Activated T-helper 1 cell treated with anti-CD3 and anti-CD28 coated beads, Interleukin-12 subunit alpha, Interleukin-12 subunit beta, Interleukin-2, Interleukin-4 antibody, amounts not matched to agents 30 ng/mL and 10 ng/mL and 1 ng/mL, durations not matched to agents 14 hours and 24 hours and 36 hours (primary cell): ENCODE measurements at regions of chr14 and their contacts with region 1.

Region 1: DNA sequence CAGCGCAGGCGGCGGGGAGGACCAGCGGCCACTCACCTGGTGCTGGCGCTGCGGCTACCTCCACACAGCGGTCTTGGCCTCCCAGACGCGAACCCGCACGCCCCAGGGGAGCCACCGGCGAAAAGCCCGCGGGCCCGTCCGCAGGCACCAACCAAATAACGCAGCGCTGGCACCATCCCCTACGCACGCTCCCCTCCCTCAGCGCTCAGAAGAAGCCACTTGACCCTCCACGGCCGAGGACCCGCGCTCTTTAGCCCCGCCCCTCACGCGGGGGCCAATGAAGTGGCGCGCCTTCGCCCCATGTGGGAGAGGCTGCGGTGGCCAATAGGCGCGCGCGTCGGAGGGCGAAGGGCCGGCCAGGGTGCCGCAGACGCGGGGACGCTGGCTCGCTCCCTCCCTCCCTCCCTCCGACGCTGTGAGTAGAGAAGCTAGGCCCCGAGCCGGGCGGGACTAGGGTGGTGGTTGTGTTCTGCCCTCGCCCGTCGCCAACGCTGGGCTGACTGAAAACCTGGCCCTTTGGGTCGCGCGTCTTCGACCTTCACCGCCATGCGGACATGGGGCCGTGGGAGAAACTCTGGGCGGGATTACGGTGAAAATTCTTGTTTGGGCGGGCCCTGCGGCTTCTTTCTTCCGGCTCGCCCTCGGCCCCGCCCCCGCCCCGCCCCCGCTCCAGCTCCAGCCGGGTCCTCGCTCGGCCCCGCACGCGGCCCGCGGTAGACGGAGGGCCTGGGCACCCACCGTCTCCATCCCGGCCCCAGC is at the starts of genes DMAC2L and L2HGDH:
- DNase-seq: peak; percentile 92
- H3K4me3 Mint-ChIP-seq: peak within 1 kb of the TSS; percentile 92
- H3K27ac Mint-ChIP-seq: peak within 1 kb of the TSS; percentile 99
- H3K4me1 Mint-ChIP-seq: peaks cover 46% of the 10 kb centered on the region
- H3K27me3 Mint-ChIP-seq: peaks cover 2% of the 10 kb centered on the region
- total RNA-seq, gene DMAC2L: 14.4 and 17.9 TPM in 2 replicates
- total RNA-seq, gene L2HGDH: 14.7 and 16.2 TPM in 2 replicates

Region 2: DNA sequence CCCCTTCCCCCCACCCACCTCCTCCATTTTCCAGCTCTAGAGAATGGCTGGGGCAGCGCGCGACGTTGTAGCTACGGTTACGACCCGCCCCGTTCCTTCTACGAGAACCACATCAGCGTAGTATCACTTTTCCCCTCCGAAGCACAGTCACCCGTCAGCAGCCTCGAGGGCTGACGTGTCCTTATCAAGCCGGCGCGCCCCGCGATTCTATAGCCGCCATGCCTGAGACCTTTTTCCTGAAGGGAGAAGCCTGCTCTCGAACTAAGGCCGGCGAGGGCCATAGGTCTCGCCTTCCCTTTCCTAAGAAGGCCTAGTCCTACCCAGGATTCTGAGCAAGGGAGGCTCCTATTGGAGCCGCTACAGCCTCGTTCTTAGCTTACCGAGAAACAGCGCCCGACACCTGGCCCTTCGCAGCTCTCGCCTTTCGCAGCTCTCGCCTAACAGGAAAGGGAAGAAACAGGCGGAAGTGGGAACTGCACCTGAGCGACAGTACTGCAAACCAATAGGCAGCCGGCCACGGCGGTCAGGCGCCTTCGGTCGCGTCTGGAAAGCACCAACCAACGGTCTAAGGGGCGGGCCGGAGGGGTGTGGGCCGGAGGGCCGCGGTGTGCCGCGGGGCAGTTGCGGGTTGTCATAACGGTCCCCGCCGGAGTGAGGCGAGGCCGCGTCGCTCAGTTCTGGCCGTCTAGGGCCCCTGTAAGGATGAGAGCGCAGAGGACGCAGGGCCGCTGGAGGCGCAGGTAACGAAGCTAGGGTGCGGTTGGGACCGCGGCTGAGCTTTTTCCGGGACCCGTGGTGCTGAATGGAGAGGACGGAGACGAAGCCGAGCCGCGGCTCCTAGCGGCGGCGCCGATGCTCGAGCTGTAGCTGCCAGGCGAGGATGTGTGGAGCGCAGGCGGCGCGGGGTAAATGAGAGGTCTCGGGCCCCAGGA is 691.7 kb before region 1 on chr14 and contains the starts of genes MGAT2 and RPL36AL:
- intact Hi-C with region 1: loop called (anchors 1 kb)
- DNase-seq: peak; percentile 96
- H3K4me3 Mint-ChIP-seq: peak within 1 kb of the TSS; percentile 98
- H3K27ac Mint-ChIP-seq: peak within 1 kb of the TSS; percentile 98
- H3K4me1 Mint-ChIP-seq: peaks cover 53% of the 10 kb centered on the region
- H3K27me3 Mint-ChIP-seq: peaks cover 2% of the 10 kb centered on the region
- total RNA-seq, gene MGAT2: 57.5 and 58.3 TPM in 2 replicates
- total RNA-seq, gene RPL36AL: 224 and 237 TPM in 2 replicates

Region 3: GRCh38 chr14:49862089-49862673 is 450.0 kb before region 1 on chr14:
- intact Hi-C with region 1: loop called (anchors 2 kb)
- DNase-seq: peak; percentile 81
- H3K4me3 Mint-ChIP-seq: no peak overlapping the region
- H3K27ac Mint-ChIP-seq: no peak overlapping the region
- H3K4me1 Mint-ChIP-seq: peaks cover 10% of the 10 kb centered on the region
- H3K27me3 Mint-ChIP-seq: peaks cover 6% of the 10 kb centered on the region

Region 4: DNA sequence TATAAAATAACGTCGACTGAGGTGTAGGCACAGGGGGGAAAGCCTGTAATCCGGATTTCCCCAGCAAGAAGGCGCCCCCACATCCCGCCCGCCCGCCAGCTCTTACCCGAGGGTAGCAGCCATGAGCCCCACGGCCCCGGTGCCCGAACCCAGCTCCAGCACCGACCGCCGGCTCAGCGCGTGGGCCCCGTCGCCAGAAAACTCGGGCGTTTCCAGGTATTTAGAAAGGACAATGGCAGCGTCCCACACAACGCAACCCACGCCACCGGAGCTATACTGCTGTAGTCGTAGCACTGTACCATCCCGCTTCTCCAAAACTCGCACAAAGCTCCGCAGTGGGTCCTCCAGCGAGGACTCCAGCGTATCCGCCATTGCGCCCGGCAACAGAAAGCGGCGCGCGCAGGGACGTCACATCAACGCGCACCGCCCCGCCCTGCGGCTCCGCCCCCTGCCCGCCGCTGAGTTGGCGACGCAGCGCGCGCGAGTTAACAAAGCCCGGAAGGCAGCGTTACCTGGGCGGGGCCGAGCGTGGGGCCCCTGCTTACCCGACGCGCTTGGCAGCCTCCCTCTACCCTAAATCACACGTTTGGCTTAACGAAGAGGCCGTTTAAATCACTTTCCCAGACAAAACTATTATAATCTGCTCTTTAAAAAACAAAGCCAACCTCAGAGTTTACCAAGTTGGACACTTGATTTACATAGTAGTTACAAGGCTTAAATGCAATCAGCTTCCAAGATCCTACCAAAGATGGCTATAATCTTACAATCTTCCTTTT is 195.8 kb before region 1 on chr14 and contains the start of gene VCPKMT:
- intact Hi-C with region 1: loop called (anchors 2 kb)
- DNase-seq: peak; percentile 95
- H3K4me3 Mint-ChIP-seq: peak within 1 kb of the TSS; percentile 97
- H3K27ac Mint-ChIP-seq: peak within 1 kb of the TSS; percentile 98
- H3K4me1 Mint-ChIP-seq: peaks cover 33% of the 10 kb centered on the region
- H3K27me3 Mint-ChIP-seq: no peaks in the 10 kb centered on the region
- total RNA-seq, gene VCPKMT: 12.3 and 15.2 TPM in 2 replicates

Region 5: DNA sequence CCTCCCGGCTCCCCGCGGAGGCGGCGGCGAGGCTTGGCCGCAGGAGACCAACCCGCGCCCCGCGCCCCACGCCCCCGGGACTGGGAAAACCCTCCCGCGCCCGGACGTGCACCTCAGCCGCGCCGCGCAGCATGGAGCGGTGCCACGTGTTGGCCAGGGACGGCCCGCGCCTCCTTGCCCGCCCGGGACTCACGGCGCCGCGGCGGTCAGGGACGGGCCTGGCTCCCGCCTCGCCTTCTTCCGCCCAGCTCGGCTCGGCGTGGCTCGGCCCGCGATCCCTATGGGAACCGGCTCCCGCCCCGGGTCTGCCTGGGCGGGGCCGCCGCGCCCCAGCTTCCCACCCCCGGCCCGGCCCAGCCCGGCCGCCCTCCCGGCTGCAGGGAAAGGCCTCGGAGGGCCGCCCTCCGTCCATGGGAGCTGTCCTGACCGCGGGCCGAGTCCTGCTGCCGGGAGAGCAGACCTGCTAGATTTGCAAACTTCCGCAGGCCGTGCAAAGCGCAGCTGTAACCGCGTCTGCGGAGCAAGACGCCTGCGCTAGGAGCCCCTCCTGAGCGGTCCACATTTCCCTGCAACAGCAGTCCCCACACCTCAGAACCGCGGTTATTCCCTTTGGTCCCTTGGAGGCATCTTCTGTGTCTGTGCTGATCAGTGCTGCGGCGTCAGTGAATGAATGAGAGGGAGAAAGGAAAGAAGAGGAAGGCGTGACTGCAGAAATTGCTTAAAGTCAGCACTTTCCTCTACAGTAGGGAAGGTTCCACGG is 84.7 kb after region 1 on chr14 and contains the start of gene CDKL1:
- intact Hi-C with region 1: loop called (anchors 2 kb)
- DNase-seq: peak; percentile 22
- H3K4me3 Mint-ChIP-seq: peak within 1 kb of the TSS; percentile 85
- H3K27ac Mint-ChIP-seq: peak within 1 kb of the TSS; percentile 79
- H3K4me1 Mint-ChIP-seq: peaks cover 14% of the 10 kb centered on the region
- H3K27me3 Mint-ChIP-seq: peaks cover 25% of the 10 kb centered on the region
- total RNA-seq, gene CDKL1: 2.4 and 2.5 TPM in 2 replicates